Stomach (tissue), 19 donors: ENCODE measurements at regions of chr15 and their contacts with region 1.

Region 1: GRCh38 chr15:23642413-23643044 is 5.1 kb downstream of the MAGEL2 start:
- DNase-seq: peak; percentile 56 to 88
- H3K4me3 ChIP-seq: no peak overlapping the region
- H3K27ac ChIP-seq: no peak overlapping the region
- H3K4me1 ChIP-seq: peaks cover 0 to 8% (median 2%) of the 10 kb centered on the region in 4 donors
- H3K27me3 ChIP-seq: peaks cover 0 to 41% (median 7%) of the 10 kb centered on the region in 3 donors
- CTCF ChIP-seq: peak in 5 of 7 experiments; percentile 64 to 80 (median 71)
- EP300 ChIP-seq: no peak
- POLR2A ChIP-seq: no peak

Region 2: GRCh38 chr15:23877502-23878412 is 235.2 kb after region 1 on chr15:
- intact Hi-C with region 1: loop called (anchors 10 kb)
- DNase-seq: peak; percentile 52 to 84
- H3K4me3 ChIP-seq: no peak overlapping the region
- H3K27ac ChIP-seq: no peak overlapping the region
- H3K4me1 ChIP-seq: peaks cover 0 to 5% (median 0%) of the 10 kb centered on the region in 4 donors
- H3K27me3 ChIP-seq: peaks cover 0 to 8% (median 0%) of the 10 kb centered on the region in 3 donors
- CTCF ChIP-seq: peak in 5 of 7 experiments; percentile 34 to 48 (median 36)
- EP300 ChIP-seq: no peak
- POLR2A ChIP-seq: no peak